CD8-positive, alpha-beta memory T cell (primary cell): ENCODE measurements at regions of chr17 and their contacts with region 1.

Region 1: GRCh38 chr17:8997994-8998628 is 23.2 kb upstream of the NTN1 start:
- DNase-seq: peak; percentile 66 to 85 (median 69)
- H3K4me3 ChIP-seq: no peak overlapping the region
- H3K4me3 Mint-ChIP-seq: peak overlapping the region in 1 of 7 donors; percentile 4
- H3K27ac ChIP-seq: no peak overlapping the region
- H3K27ac Mint-ChIP-seq: peak overlapping the region in 1 of 8 donors; percentile 61
- H3K4me1 ChIP-seq: peaks cover 8% of the 10 kb centered on the region
- H3K4me1 Mint-ChIP-seq: peaks cover 7 to 19% (median 10%) of the 10 kb centered on the region in 3 donors
- H3K27me3 ChIP-seq: peaks cover 7% of the 10 kb centered on the region
- H3K27me3 Mint-ChIP-seq: peaks cover 27 to 30% of the 10 kb centered on the region in 2 donors

Region 2: GRCh38 chr17:8753976-8754440 is 244.1 kb before region 1 on chr17:
- CTCF ChIA-PET with region 1: interaction called, 10 read pairs
- POLR2A ChIA-PET with region 1: no interaction called
- DNase-seq: no peak
- H3K4me3 ChIP-seq: no peak overlapping the region
- H3K4me3 Mint-ChIP-seq: no peak overlapping the region
- H3K27ac ChIP-seq: no peak overlapping the region
- H3K27ac Mint-ChIP-seq: no peak overlapping the region
- H3K4me1 ChIP-seq: no peaks in the 10 kb centered on the region
- H3K4me1 Mint-ChIP-seq: no peaks in the 10 kb centered on the region
- H3K27me3 ChIP-seq: no peaks in the 10 kb centered on the region
- H3K27me3 Mint-ChIP-seq: peaks cover 13 to 31% of the 10 kb centered on the region in 2 donors

Region 3: DNA sequence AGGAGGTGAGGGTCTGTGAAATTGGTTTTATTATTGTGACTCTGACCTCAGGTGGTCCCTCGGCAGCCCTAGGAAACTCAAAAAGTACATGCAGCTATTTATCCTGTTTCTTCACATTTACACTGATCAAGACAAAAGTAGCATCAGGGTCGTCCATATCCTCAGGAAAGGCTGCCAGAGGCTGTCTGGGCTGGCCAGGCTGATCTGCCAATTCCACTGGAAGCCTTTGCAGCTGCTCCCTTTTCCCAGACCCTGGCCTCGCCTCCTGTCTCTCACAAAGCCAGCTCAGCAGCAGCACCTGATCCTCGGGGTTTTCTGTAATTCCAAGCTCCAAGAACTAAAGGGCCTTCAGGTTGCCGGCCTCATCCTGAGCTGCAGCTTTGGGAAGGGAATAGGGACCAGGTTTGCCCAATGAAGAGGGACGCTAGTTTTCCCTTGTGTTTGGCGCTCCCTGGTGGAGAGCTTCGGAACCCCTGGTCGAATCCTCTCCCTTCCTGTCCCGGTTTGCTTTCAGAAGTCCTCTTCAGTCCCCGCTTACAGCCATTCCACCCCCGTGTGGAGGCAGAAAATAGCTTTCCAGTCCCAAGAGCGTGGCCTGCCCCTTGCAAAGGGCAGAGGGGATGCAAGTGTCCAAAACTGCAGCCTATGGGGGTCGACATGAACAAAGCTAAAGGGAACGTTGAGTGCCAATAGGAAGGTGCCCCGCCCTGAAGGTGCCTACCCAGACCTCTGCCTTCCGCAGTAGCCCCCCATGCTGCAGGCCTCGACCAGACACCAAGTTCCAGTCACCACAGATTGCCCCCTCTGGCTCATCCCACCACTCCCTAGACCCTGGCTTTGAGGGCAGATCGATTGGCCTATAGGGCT is 212.3 kb before region 1 on chr17:
- CTCF ChIA-PET with region 1: interaction called, 10 read pairs
- POLR2A ChIA-PET with region 1: no interaction called
- DNase-seq: peak; percentile 19 to 59 (median 46)
- H3K4me3 ChIP-seq: no peak overlapping the region
- H3K4me3 Mint-ChIP-seq: no peak overlapping the region
- H3K27ac ChIP-seq: no peak overlapping the region
- H3K27ac Mint-ChIP-seq: no peak overlapping the region
- H3K4me1 ChIP-seq: no peaks in the 10 kb centered on the region
- H3K4me1 Mint-ChIP-seq: peaks cover 0 to 2% (median 0%) of the 10 kb centered on the region in 3 donors
- H3K27me3 ChIP-seq: no peaks in the 10 kb centered on the region
- H3K27me3 Mint-ChIP-seq: peaks cover 0 to 2% of the 10 kb centered on the region in 2 donors

Region 4: GRCh38 chr17:8894673-8895578 is 103.2 kb before region 1 on chr17:
- CTCF ChIA-PET with region 1: interaction called, 18 read pairs
- POLR2A ChIA-PET with region 1: no interaction called
- DNase-seq: peak in 2 of 5 donors; percentile 28 to 46
- H3K4me3 ChIP-seq: no peak overlapping the region
- H3K4me3 Mint-ChIP-seq: peak overlapping the region in 3 of 7 donors; percentile 1 to 9 (median 2)
- H3K27ac ChIP-seq: no peak overlapping the region
- H3K27ac Mint-ChIP-seq: peak overlapping the region; percentile 65 to 99 (median 91)
- H3K4me1 ChIP-seq: peaks cover 52% of the 10 kb centered on the region
- H3K4me1 Mint-ChIP-seq: peaks cover 55 to 76% (median 66%) of the 10 kb centered on the region in 3 donors
- H3K27me3 ChIP-seq: no peaks in the 10 kb centered on the region
- H3K27me3 Mint-ChIP-seq: peaks cover 0 to 1% of the 10 kb centered on the region in 2 donors

Region 5: DNA sequence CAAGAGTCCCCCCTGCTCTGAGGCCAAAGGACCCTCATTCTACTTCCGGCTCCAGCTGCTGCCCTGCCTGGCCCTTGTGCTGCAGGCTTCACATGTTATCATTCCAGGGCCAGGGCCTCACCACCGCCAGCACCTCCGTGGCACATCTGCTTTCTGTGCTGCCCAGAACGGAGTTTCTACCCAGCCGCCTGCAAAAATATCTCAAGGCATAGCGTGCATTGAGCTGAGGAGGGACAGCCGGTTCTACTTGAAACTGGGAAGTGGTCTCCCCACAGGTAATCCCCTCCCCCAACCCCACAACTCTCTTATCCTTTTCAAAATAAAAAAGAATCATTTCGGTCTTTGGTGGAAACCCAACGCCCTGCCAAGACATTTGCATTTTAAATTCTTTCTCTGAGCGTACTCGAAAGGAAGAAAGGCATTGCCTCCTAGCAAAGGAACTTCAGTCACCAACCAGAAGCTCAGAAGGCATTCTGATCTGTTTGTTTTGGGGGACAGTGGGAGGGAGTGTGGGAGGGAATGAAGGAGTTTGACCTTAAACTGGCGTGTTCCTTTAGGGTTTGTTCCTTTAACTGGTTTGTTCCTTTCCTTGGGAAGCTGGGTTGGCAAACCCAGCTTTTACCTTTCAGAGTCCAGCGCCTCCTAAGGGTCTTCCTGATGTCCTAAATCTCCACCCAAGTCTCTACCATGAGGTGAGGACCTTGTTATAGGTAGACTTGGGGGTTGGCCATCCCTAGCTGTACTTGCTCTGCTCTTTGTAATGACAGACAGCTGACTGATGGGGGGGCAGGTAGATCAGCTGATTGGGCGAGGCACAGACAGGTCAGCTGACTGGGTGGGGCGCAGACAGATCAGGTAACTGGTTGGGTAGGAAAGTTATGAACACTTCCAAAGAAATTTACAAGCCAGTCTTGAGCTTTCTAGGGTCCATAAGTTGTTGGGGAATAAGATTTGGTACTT is 97.2 kb before region 1 on chr17:
- CTCF ChIA-PET with region 1: interaction called, 18 read pairs
- POLR2A ChIA-PET with region 1: no interaction called
- DNase-seq: peak in 1 of 5 donors; percentile 46
- H3K4me3 ChIP-seq: no peak overlapping the region
- H3K4me3 Mint-ChIP-seq: peak overlapping the region in 3 of 7 donors; percentile 5 to 24 (median 19)
- H3K27ac ChIP-seq: no peak overlapping the region
- H3K27ac Mint-ChIP-seq: peak overlapping the region; percentile 93 to 99 (median 97)
- H3K4me1 ChIP-seq: peaks cover 60% of the 10 kb centered on the region
- H3K4me1 Mint-ChIP-seq: peaks cover 77 to 81% (median 80%) of the 10 kb centered on the region in 3 donors
- H3K27me3 ChIP-seq: no peaks in the 10 kb centered on the region
- H3K27me3 Mint-ChIP-seq: peaks cover 0 to 1% of the 10 kb centered on the region in 2 donors

Region 6: DNA sequence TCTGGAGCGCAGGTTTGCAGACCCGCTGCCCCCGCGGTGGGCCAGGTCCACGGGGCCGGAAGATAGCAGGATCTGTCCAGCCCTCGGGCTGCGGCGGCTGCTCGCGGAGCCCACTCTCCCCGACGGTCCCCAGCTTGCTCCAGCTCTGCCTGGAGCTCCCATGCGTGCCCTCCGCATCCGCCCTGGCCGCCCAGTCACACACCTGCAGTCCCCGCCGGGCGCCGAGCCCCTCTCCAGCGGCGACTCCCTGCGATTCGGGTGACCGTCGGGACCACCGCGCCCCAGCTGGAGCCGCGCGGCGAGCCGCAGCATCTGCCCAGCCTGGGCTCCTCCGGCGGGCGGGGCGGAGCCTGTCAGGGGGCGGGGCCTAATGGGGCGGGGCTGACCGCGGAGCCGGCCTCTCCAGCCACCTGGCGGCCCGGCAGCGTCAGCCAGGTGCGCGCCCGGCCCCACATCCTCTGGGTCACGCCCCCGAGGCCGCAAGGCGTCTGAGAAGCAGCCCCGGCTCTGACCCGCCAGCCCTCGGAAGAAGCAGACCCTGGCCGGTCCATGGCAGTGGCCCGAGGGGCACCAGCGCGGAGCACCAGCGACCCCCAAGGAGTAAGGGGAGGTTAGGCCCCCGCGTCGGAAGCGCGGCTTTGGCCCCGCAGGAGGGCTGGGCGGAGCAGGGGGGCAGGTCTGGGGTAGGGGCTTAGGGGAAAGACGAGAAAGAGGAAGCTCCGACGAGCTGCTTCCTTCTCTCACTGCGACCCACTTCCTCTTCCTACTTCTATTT is 32.5 kb before region 1 on chr17 and contains the start of gene PIK3R5:
- CTCF ChIA-PET with region 1: interaction called, 13 read pairs
- POLR2A ChIA-PET with region 1: interaction called, 4 read pairs
- DNase-seq: peak; percentile 78 to 86 (median 81)
- H3K4me3 ChIP-seq: peak within 1 kb of the TSS; percentile 77
- H3K4me3 Mint-ChIP-seq: peak within 1 kb of the TSS; percentile 98 to 100 (median 99)
- H3K27ac ChIP-seq: peak within 1 kb of the TSS; percentile 72
- H3K27ac Mint-ChIP-seq: peak within 1 kb of the TSS; percentile 90 to 99 (median 96)
- H3K4me1 ChIP-seq: peaks cover 44% of the 10 kb centered on the region
- H3K4me1 Mint-ChIP-seq: peaks cover 39 to 50% (median 44%) of the 10 kb centered on the region in 3 donors
- H3K27me3 ChIP-seq: no peaks in the 10 kb centered on the region
- H3K27me3 Mint-ChIP-seq: peaks cover 0 to 2% of the 10 kb centered on the region in 2 donors
- total RNA-seq, gene PIK3R5: 28.6 to 30.2 TPM

Region 7: GRCh38 chr17:8986290-8986689 is 11.8 kb before region 1 on chr17:
- CTCF ChIA-PET with region 1: interaction called, 14 read pairs
- POLR2A ChIA-PET with region 1: no interaction called
- DNase-seq: no peak
- H3K4me3 ChIP-seq: no peak overlapping the region
- H3K4me3 Mint-ChIP-seq: peak overlapping the region in 1 of 7 donors; percentile 48
- H3K27ac ChIP-seq: no peak overlapping the region
- H3K27ac Mint-ChIP-seq: peak overlapping the region in 4 of 8 donors; percentile 5 to 82 (median 44)
- H3K4me1 ChIP-seq: peaks cover 6% of the 10 kb centered on the region
- H3K4me1 Mint-ChIP-seq: peaks cover 14 to 20% (median 16%) of the 10 kb centered on the region in 3 donors
- H3K27me3 ChIP-seq: no peaks in the 10 kb centered on the region
- H3K27me3 Mint-ChIP-seq: peaks cover 3% of the 10 kb centered on the region in 2 donors

Region 8: GRCh38 chr17:9026741-9027140 is 28.6 kb after region 1 on chr17:
- CTCF ChIA-PET with region 1: no interaction called
- POLR2A ChIA-PET with region 1: no interaction called
- DNase-seq: no peak
- H3K4me3 ChIP-seq: no peak overlapping the region
- H3K4me3 Mint-ChIP-seq: no peak overlapping the region
- H3K27ac ChIP-seq: no peak overlapping the region
- H3K27ac Mint-ChIP-seq: no peak overlapping the region
- H3K4me1 ChIP-seq: peaks cover 4% of the 10 kb centered on the region
- H3K4me1 Mint-ChIP-seq: peaks cover 9 to 18% (median 10%) of the 10 kb centered on the region in 3 donors
- H3K27me3 ChIP-seq: peaks cover 22% of the 10 kb centered on the region
- H3K27me3 Mint-ChIP-seq: peaks cover 54 to 81% of the 10 kb centered on the region in 2 donors

Region 9: DNA sequence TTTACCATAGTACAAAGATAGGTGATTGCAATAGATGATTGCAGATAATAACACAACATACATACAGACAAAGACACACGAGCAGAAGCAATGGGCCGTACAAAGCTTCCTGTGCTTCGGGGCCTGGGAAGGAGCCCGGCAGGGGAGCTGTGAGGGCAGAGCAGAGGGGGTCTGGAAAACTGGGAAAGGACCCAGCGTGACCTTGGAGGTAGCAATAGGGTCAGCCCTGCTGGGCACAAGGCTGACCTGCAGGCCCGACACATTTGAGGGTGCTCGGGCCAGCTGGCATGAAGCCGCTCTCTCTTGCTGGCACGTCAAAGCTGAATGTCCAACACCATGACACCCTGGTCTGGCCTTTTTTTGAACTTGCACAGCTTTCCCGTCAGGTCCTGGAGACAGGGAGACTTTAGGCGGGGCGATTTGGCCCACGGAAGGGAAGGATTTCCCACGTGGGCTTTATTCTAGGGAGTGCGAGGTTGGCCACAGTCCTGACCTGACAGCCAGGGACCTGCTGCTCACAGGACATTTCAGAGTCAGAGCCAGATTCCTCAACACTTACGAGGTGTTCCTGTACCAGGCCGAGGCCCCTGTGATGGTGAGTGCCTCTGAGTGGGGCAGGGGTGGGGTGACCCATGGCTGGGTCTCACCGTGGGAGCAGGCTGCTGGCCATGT is 106.4 kb after region 1 on chr17:
- CTCF ChIA-PET with region 1: no interaction called
- POLR2A ChIA-PET with region 1: no interaction called
- DNase-seq: no peak
- H3K4me3 ChIP-seq: no peak overlapping the region
- H3K4me3 Mint-ChIP-seq: no peak overlapping the region
- H3K27ac ChIP-seq: no peak overlapping the region
- H3K27ac Mint-ChIP-seq: no peak overlapping the region
- H3K4me1 ChIP-seq: no peaks in the 10 kb centered on the region
- H3K4me1 Mint-ChIP-seq: no peaks in the 10 kb centered on the region
- H3K27me3 ChIP-seq: no peaks in the 10 kb centered on the region
- H3K27me3 Mint-ChIP-seq: peaks cover 11 to 44% of the 10 kb centered on the region in 2 donors